Psoas muscle (tissue), 8 donors: ENCODE measurements at regions of chrX and their contacts with region 1.

Region 1: DNA sequence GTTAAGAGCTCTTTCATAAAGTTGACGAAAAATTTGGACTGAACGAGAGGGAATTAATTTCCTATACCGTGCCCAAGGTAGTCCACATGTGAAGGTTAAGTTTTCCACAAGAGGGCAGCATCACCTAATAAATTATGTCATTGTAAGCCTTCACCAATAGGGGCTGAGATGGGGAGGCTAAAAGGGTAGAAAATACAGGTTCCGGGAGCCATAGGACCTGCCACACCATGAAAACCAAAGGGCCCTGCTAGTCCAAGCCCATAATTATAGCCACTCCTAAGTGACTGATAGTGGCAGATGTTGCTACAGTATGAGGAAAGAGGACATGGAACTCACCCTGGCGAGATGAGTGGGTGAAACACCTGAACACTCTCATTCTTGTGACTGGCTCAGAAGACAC is 122.2 kb downstream of the SHROOM4 start:
- DNase-seq: no peak
- ATAC-seq: peak in 3 of 4 donors; percentile 40 to 60 (median 44)
- H3K4me3 ChIP-seq: no peak overlapping the region
- H3K27ac ChIP-seq: no peak overlapping the region
- H3K4me1 ChIP-seq: no peaks in the 10 kb centered on the region
- H3K27me3 ChIP-seq: peaks cover 0 to 25% (median 0%) of the 10 kb centered on the region in 3 donors
- CTCF ChIP-seq: peak; percentile 73

Region 2: GRCh38 chrX:50747471-50747900 is 55.7 kb after region 1 on chrX:
- intact Hi-C with region 1: no loop called
- DNase-seq: no peak
- ATAC-seq: no peak
- H3K4me3 ChIP-seq: no peak overlapping the region
- H3K27ac ChIP-seq: no peak overlapping the region
- H3K4me1 ChIP-seq: no peaks in the 10 kb centered on the region
- H3K27me3 ChIP-seq: peaks cover 0 to 13% (median 0%) of the 10 kb centered on the region in 3 donors
- CTCF ChIP-seq: peak; percentile 48

Region 3: DNA sequence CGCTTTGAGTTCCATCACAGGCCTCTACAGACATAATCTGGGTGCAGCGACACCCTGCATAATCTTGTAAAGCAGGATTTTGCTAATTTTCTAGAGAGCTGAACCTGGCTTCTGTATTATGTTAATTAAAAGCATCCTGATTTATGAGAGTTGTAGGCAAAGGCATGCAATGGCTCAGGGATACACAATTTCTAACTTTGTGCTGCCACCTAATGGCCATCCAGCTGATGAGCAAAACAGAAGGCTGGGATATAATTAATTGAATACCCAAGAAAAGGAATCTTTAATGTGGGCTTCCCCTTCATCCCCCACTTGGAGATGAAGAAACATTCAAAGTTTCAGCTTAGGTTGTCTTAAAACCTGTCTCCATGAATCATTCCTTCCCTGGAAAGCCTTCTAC is 296.8 kb after region 1 on chrX:
- intact Hi-C with region 1: loop called in 1 of 2 experiments (anchors 5 kb)
- DNase-seq: no peak
- ATAC-seq: no peak
- H3K4me3 ChIP-seq: no peak overlapping the region
- H3K27ac ChIP-seq: no peak overlapping the region
- H3K4me1 ChIP-seq: no peaks in the 10 kb centered on the region
- H3K27me3 ChIP-seq: peaks cover 0 to 27% (median 0%) of the 10 kb centered on the region in 3 donors
- CTCF ChIP-seq: peak; percentile 43

Region 4: GRCh38 chrX:51420610-51421009 is 728.8 kb after region 1 on chrX:
- intact Hi-C with region 1: loop called in 1 of 2 experiments (anchors 5 kb)
- DNase-seq: no peak
- ATAC-seq: no peak
- H3K4me3 ChIP-seq: no peak overlapping the region
- H3K27ac ChIP-seq: no peak overlapping the region
- H3K4me1 ChIP-seq: no peaks in the 10 kb centered on the region
- H3K27me3 ChIP-seq: peaks cover 0 to 18% (median 0%) of the 10 kb centered on the region in 3 donors
- CTCF ChIP-seq: peak; percentile 69